ENCODE measurements at regions of chr12 and their contacts with region 1.

Region 1: DNA sequence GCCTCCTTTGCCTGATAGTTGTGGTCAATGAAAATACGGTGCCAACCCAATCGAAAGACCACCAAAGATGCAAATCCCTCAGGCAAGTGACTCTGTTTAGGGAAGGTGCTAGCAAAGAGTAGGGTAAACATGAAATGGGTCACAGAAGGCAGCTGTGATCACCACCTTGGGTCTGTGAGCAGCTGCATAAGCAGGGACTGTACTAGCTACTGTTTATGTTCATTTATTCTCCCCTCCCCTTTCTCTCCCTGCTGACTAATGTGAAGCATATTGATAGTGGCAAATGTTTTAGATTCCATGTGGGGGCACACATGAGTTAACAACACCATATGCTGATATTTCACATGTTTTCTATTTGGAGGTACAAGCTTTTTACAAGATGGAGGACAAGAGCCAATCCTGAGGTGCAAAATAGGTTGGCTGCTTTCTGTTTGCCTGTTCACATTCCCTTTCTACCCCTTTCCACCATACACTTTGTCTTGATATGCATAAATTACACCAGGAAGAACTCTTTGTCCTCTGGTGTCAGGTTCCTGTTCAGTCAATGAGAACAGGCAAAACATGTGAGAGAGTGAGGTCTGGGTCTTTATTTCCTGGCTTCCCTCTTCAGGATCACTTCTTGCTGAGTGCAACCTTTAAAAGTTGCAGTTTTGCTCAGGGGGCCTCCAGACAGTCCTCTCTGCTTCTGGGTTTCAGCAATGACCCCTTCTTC is 71.1 kb downstream of the AVPR1A start:
- DNase-seq: no peak
- ATAC-seq: no peak
- H3K4me3 ChIP-seq: no peak overlapping the region
- H3K27ac ChIP-seq: no peak overlapping the region
- H3K4me1 ChIP-seq: peaks cover 0 to 5% (median 0%) of the 10 kb centered on the region in 12 donors
- H3K27me3 ChIP-seq: no peaks in the 10 kb centered on the region
- CTCF ChIP-seq: no peak
- POLR2A ChIP-seq: no peak

Region 2: GRCh38 chr12:61923152-61923551 is 1156.8 kb before region 1 on chr12:
- intact Hi-C with region 1: no loop called
- DNase-seq: no peak
- ATAC-seq: no peak
- H3K4me3 ChIP-seq: no peak overlapping the region
- H3K27ac ChIP-seq: no peak overlapping the region
- H3K4me1 ChIP-seq: no peaks in the 10 kb centered on the region
- H3K27me3 ChIP-seq: no peaks in the 10 kb centered on the region
- CTCF ChIP-seq: no peak
- POLR2A ChIP-seq: no peak

Region 3: GRCh38 chr12:62446754-62447452 is 633.0 kb before region 1 on chr12:
- intact Hi-C with region 1: loop called in 1 of 10 experiments (anchors 10 kb)
- DNase-seq: no peak
- ATAC-seq: no peak
- H3K4me3 ChIP-seq: no peak overlapping the region
- H3K27ac ChIP-seq: no peak overlapping the region
- H3K4me1 ChIP-seq: no peaks in the 10 kb centered on the region
- H3K27me3 ChIP-seq: peaks cover 0 to under 1% (median 0%) of the 10 kb centered on the region in 9 donors
- CTCF ChIP-seq: no peak
- POLR2A ChIP-seq: no peak

Region 4: GRCh38 chr12:63124778-63125177 is 44.8 kb after region 1 on chr12:
- intact Hi-C with region 1: no loop called
- DNase-seq: no peak
- ATAC-seq: no peak
- H3K4me3 ChIP-seq: no peak overlapping the region
- H3K27ac ChIP-seq: no peak overlapping the region
- H3K4me1 ChIP-seq: no peaks in the 10 kb centered on the region
- H3K27me3 ChIP-seq: peaks cover 0 to 4% (median 0%) of the 10 kb centered on the region in 9 donors
- CTCF ChIP-seq: no peak
- POLR2A ChIP-seq: no peak

Region 5: DNA sequence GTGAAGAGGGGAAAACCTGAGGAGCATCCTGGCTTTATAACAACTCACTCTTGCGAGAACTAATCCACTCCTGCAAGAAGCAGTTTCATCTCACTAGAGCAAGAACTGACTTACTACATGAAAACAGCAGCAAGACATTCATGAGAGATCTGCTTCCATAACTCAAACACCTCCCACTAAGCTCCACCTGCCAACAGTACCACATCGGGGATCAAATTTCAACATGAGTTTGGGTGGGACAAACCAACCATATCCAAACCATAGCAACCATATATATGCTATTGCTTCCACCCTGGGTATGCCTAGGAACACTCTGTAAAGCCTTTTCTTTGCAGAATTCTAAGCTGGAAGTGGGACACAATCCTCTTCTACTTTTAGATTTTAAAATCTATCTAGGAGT is 85.0 kb after region 1 on chr12:
- intact Hi-C with region 1: no loop called
- DNase-seq: no peak
- ATAC-seq: no peak
- H3K4me3 ChIP-seq: no peak overlapping the region
- H3K27ac ChIP-seq: no peak overlapping the region
- H3K4me1 ChIP-seq: no peaks in the 10 kb centered on the region
- H3K27me3 ChIP-seq: peaks cover 0 to 5% (median 0%) of the 10 kb centered on the region in 9 donors
- CTCF ChIP-seq: no peak
- POLR2A ChIP-seq: no peak

Region 6: GRCh38 chr12:63292476-63293221 is 212.7 kb after region 1 on chr12:
- intact Hi-C with region 1: no loop called
- DNase-seq: no peak
- ATAC-seq: no peak
- H3K4me3 ChIP-seq: no peak overlapping the region
- H3K27ac ChIP-seq: no peak overlapping the region
- H3K4me1 ChIP-seq: peaks cover 0 to 6% (median 0%) of the 10 kb centered on the region in 12 donors
- H3K27me3 ChIP-seq: no peaks in the 10 kb centered on the region
- CTCF ChIP-seq: no peak
- POLR2A ChIP-seq: no peak

Measured in heart left ventricle (tissue), 16 donors.